ENCODE measurements at regions of chr5 and their contacts with region 1.

Region 1: DNA sequence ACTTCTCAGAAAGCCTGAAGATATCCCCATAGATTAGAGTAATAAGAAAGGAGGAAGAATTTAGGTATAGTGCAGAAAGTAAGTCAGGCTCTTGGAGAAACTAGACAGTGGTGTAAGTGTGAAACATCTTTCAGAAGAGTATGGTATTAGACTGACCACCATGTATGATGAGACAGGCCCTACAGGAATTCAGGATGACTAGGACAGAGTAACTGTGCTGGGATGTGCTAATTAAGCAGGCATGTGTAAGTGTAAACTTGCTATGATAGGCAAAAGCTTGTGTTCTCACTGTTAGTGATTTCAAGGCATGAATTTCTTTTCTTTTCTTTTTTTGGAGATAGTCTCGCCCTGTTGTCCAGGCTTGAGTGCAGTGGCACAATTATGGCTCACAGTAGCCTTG is 70.8 kb downstream of the RAB24 start:
- DNase-seq: peak; percentile 33
- H3K4me3 ChIP-seq: no peak overlapping the region
- H3K27ac ChIP-seq: no peak overlapping the region
- H3K4me1 ChIP-seq: peaks cover 12% of the 10 kb centered on the region
- H3K27me3 ChIP-seq: no peaks in the 10 kb centered on the region
- CTCF ChIP-seq: no peak

Region 2: DNA sequence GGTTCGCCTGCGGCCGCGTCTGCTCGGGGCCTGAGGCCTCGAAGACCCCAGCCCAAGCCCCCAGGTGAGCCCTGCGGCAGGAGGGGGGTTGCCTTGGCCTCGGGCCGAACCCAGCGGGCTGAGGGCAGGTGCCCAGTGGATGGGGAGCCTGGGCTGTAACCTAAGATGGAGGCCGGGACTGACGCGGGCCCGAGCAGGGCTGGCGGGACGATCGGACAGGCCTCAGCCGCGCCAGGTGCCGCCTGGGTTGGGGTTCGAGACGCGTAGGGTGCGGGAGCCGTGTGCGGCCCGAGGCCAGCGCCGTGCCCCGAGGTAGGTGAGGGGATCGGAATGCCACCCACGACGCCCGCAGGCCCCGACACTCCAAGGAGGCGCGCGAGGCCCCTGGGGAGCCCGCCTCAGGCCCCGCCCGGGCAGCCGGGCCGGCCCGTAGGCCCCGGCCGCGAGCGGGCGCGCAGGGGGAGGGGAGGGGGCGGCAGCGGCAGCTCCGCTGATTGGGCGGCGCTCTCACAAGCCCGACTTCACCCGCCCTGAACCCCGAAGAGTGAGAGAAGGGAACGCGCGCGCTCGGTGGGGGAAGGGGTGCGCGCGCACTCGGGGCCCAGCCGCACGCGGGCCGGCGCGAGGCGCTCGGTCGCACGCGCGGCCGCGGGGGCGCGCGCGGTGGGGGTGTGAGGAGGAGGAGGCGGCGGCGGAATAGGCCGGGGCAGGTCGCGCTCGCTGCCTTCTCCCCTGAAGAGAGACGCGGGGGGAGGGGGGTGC is 99.5 kb before region 1 on chr5 and contains the start of gene NSD1:
- CTCF ChIA-PET with region 1: no interaction called
- dilution Hi-C with region 1: loop called (anchors 5 kb)
- in situ Hi-C with region 1: no loop called
- intact Hi-C with region 1: no loop called
- DNase-seq: peak; percentile 57
- H3K4me3 ChIP-seq: peak within 1 kb of the TSS; percentile 67 to 69 (median 69)
- H3K27ac ChIP-seq: peak within 1 kb of the TSS; percentile 63
- H3K4me1 ChIP-seq: peaks cover 34% of the 10 kb centered on the region
- H3K27me3 ChIP-seq: no peaks in the 10 kb centered on the region
- CTCF ChIP-seq: no peak
- total RNA-seq, gene NSD1: 53.0 to 55.7 TPM

Region 3: DNA sequence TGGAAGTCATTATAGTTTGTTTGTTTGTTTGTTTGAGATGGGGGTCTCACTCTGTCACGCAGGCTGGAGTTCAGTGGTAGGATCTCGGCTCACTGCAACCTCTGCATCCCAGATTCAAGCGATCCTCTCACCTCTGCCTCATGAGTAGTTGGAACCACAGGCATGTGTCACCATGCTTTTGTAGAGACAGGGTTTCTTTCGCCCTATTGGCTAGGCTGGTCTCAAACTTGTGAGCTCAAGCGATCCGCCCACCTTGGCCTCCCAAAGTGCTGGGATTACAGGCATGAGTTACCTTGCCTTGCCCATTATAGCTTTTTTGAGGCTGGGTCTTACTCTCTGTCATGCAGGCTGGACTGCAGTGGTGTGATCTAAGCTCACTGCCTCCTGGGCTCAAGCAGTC is 70.4 kb before region 1 on chr5:
- CTCF ChIA-PET with region 1: no interaction called
- dilution Hi-C with region 1: loop called (anchors 5 kb)
- in situ Hi-C with region 1: no loop called
- intact Hi-C with region 1: no loop called
- DNase-seq: peak; percentile 5
- H3K4me3 ChIP-seq: no peak overlapping the region
- H3K27ac ChIP-seq: no peak overlapping the region
- H3K4me1 ChIP-seq: no peaks in the 10 kb centered on the region
- H3K27me3 ChIP-seq: peaks cover 3% of the 10 kb centered on the region
- CTCF ChIP-seq: no peak

Measured in mammary epithelial cell (primary cell).